H1 (cell line): ENCODE measurements at regions of chr5 and their contacts with region 1.

Region 1: DNA sequence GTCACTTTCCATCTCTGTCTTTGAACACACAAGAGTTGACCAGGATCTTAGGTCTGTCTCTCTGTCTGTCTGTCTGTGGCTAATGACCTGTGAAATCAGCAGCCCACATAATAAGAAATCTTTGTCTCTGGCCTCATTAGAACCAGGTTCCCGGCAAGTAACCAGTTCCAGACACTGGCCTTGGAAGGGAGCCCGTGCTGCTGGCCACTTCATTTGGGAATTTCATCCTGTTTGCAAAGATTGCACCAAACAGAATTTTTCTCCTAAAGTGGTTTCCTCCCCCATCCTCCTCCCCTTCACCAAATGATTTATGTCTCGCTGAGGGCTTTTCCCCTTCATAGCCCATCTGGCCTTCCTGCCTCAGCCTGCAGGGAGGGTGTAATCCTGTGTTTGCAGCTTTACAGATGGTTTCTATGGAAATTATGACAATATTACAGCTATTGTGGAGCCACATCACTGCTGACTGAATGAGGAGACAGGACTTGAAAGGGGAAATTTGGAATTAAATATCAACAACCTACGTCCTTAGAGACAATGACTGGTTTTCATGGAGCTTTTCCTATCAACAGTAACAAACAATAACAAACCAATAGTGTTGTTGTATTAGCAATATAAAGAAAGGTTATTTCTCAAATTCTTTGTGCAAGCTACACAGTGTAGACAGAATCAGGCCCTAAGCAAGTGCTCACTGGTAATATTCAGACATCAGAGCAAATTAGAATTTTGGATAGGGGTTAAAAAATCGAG is 25.7 kb downstream of the DPYSL3 start:
- DNase-seq: no peak
- H3K4me3 ChIP-seq: no peak overlapping the region
- H3K27ac ChIP-seq: peak overlapping the region; percentile 15; the same call in 1 of the 2 replicates
- H3K4me1 ChIP-seq: peaks cover 0 to 24% (median 15%) of the 10 kb centered on the region in 4 experiments; a peak in 5 of 7 replicates
- H3K27me3 ChIP-seq: no peaks in the 10 kb centered on the region
- CTCF ChIP-seq: no peak
- EP300 ChIP-seq: no peak
- POLR2A ChIP-seq: no peak
- RAD21 ChIP-seq: no peak

Region 2: DNA sequence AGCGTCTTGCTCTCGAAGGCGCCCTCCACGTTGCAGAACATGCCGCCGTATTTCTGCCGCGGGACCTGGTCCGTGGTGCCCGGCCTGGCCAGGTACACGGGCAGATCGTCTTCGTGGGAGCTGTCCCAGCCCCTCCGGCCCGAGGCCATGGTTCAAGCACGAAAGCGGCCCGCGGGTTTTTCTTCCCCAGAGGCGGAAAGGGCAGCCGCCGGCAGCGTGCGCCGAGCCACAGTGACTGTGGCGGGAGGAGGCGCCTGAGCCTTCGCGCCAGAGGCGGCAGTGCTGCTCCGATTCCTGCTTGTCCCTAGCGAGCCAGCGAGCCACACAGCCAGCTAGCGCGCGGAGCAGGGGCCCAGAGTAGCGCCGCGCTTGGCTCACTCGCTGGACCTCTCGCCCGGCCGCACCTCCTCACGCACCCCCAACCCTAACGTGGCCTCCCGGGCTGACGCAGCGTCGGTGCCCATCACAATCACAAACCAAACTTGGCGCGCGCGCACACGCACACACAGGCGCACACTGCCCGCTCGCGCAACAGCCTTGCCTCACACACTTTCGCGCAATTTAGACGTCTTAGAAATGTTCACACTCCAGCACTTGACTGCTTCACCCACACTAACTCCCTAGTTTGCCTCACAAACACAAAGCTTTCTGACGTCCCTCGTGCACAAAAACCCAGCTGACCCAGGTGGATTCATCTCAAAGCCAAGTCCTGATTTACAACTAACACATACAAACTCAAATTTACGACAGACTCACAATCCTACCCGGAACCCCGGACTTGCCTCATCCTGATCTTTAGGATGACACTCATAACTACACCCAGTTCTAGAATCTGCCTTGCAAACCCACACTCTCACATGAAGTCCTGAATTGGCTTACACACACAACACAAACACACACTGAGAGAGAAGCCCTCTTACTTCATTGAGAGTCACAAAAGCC is 25.8 kb after region 1 on chr5 and contains the start of gene DPYSL3:
- CTCF ChIA-PET with region 1: interaction called, 21 read pairs
- POLR2A ChIA-PET with region 1: interaction called, 5 read pairs
- DNase-seq: peak; percentile 44 to 84
- H3K4me3 ChIP-seq: peak within 1 kb of the TSS; percentile 70 to 96 (median 90)
- H3K27ac ChIP-seq: peak within 1 kb of the TSS; percentile 68; the same call in 1 of the 2 replicates
- H3K4me1 ChIP-seq: peaks cover 3 to 11% (median 5%) of the 10 kb centered on the region in 4 experiments; a peak in 5 of 7 replicates
- H3K27me3 ChIP-seq: peaks cover 2 to 13% (median 12%) of the 10 kb centered on the region in 4 experiments; a peak in 5 of 7 replicates
- CTCF ChIP-seq: peak; percentile 28 to 66 (median 48); a peak in 3 of 4 replicates
- EP300 ChIP-seq: no peak
- POLR2A ChIP-seq: peak in 1 of 2 experiments; percentile 73; a peak in 2 of 3 replicates
- RAD21 ChIP-seq: peak; percentile 40 to 48
- total RNA-seq, gene DPYSL3: 385 and 387 TPM in 2 replicates

Region 3: DNA sequence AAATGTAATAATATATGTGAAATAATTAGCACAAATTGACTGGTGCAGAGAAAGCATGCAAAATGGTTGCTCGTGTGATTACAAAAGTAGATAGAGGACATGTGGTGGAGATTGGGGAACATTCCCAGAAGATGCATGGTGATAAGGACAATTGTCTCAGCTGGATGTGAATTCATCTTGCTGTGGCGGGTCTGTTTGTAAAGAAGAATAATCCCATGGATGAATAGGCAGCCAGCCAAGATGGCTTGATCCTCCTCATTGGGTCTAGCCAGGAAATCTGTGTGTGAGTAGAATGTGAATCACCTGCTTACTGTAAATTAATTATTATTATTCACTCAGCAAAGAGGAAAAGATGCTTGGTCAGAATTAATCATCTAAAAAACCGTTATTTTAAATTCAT is 38.3 kb after region 1 on chr5:
- CTCF ChIA-PET with region 1: no interaction called
- POLR2A ChIA-PET with region 1: no interaction called
- DNase-seq: no peak
- H3K4me3 ChIP-seq: no peak overlapping the region
- H3K27ac ChIP-seq: no peak overlapping the region
- H3K4me1 ChIP-seq: peaks cover 0 to 7% (median 4%) of the 10 kb centered on the region in 4 experiments; a peak in 4 of 7 replicates
- H3K27me3 ChIP-seq: no peaks in the 10 kb centered on the region
- CTCF ChIP-seq: no peak
- EP300 ChIP-seq: no peak
- POLR2A ChIP-seq: no peak
- RAD21 ChIP-seq: no peak